Aorta (tissue), 5 donors: ENCODE measurements at regions of chr22 and their contacts with region 1.

Region 1: GRCh38 chr22:24059121-24059520 is 48.0 kb downstream of the CABIN1 start:
- DNase-seq: no peak
- ATAC-seq: peak; percentile 58
- H3K4me3 ChIP-seq: no peak overlapping the region
- H3K27ac ChIP-seq: peak overlapping the region in 1 of 2 donors; percentile 56
- H3K4me1 ChIP-seq: no peaks in the 10 kb centered on the region
- H3K27me3 ChIP-seq: no peaks in the 10 kb centered on the region

Region 2: GRCh38 chr22:24076091-24076867 is 17.2 kb after region 1 on chr22:
- intact Hi-C with region 1: no loop called
- DNase-seq: peak in 1 of 2 donors; percentile 40
- ATAC-seq: no peak
- H3K4me3 ChIP-seq: no peak overlapping the region
- H3K27ac ChIP-seq: no peak overlapping the region
- H3K4me1 ChIP-seq: no peaks in the 10 kb centered on the region
- H3K27me3 ChIP-seq: no peaks in the 10 kb centered on the region

Region 3: DNA sequence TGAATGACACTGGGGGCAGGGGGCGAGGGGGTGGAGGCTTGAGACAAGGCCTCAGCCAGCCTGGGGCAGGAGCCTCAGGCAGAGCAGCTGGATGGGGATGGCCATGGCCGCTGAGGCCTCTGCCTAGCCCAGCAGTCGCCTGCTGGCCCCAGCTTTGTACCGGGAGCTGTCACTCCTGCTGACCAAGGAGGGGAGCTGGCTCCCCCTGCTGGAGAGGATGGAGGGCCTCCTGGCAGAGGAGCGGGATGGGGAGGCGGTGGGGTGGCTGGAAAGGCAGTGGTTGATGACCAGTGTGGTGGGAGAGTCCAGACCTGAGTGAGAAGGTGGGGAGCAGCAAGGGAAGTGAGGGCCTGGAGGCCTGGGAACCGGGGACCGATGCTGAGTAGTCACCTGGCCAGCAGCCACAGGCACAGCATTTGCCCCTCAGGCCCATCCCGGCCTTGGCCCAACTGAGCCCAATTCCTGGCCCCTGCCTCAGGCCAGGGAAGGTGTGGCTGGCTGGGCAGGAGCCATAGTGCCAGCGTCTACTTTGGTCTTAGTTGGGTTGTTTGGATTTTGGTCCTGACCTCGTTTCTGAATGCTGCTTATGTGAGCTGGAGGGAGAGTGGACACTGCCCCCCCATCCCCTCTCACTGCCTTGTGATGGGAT is 116.2 kb after region 1 on chr22:
- intact Hi-C with region 1: loop called in 1 of 2 experiments (anchors 10 kb)
- DNase-seq: peak; percentile 92 to 95
- ATAC-seq: peak; percentile 81
- H3K4me3 ChIP-seq: no peak overlapping the region
- H3K27ac ChIP-seq: peak overlapping the region in 1 of 2 donors; percentile 74
- H3K4me1 ChIP-seq: no peaks in the 10 kb centered on the region
- H3K27me3 ChIP-seq: no peaks in the 10 kb centered on the region

Region 4: GRCh38 chr22:25159028-25159427 is 1099.9 kb after region 1 on chr22:
- intact Hi-C with region 1: no loop called
- DNase-seq: no peak
- ATAC-seq: no peak
- H3K4me3 ChIP-seq: no peak overlapping the region
- H3K27ac ChIP-seq: no peak overlapping the region
- H3K4me1 ChIP-seq: peaks cover 2 to 9% of the 10 kb centered on the region in 2 donors
- H3K27me3 ChIP-seq: no peaks in the 10 kb centered on the region